ENCODE measurements at regions of chr6 and their contacts with region 1.

Region 1: DNA sequence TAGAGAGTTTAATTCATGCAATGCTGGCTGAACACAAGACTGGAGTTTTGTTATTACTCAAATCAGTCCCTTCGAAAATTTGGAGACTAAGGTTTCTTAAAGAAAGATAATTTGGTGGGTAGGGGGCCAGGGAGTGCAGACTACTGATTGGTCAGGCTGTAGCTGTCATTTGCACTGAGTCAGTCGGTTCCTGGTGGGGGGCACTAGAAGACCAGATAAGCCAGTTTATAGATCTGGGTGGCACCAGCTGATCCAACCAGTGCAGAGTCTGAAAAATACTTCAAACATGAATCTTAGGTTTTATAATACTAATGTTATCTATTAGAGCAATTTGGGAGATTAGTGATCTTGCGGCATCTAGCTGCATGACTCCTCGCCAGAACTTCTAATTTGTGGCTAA is 530.7 kb downstream of the NKAIN2 start:
- DNase-seq: no peak
- ATAC-seq: no peak
- H3K4me3 ChIP-seq: no peak overlapping the region
- H3K27ac ChIP-seq: no peak overlapping the region
- H3K4me1 ChIP-seq: no peaks in the 10 kb centered on the region
- H3K27me3 ChIP-seq: no peaks in the 10 kb centered on the region
- CTCF ChIP-seq: no peak
- POLR2A ChIP-seq: no peak

Region 2: GRCh38 chr6:124076336-124077048 is 257.9 kb before region 1 on chr6:
- intact Hi-C with region 1: no loop called
- DNase-seq: peak in 1 of 4 donors; percentile 5
- ATAC-seq: no peak
- H3K4me3 ChIP-seq: no peak overlapping the region
- H3K27ac ChIP-seq: no peak overlapping the region
- H3K4me1 ChIP-seq: no peaks in the 10 kb centered on the region
- H3K27me3 ChIP-seq: no peaks in the 10 kb centered on the region
- CTCF ChIP-seq: no peak
- POLR2A ChIP-seq: no peak

Region 3: DNA sequence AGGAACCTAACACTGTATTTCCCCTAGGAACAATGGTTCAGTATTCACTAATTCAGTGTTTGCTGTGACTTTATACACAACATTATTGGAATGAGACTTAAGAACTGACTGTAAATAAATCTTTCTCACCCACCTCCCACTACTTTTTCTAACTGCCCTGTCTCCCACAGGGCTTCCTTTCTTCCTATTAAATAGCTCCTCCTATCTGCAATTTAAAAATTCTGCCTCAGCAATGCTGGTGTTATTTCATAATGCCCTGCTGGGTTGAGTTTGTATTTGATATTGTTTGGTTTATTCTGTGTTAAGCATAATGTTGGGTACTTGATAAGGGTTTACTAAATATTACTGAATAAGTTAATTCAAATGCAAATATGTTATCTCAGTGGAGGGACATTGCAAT is 54.8 kb after region 1 on chr6:
- intact Hi-C with region 1: no loop called
- DNase-seq: no peak
- ATAC-seq: no peak
- H3K4me3 ChIP-seq: no peak overlapping the region
- H3K27ac ChIP-seq: no peak overlapping the region
- H3K4me1 ChIP-seq: no peaks in the 10 kb centered on the region
- H3K27me3 ChIP-seq: no peaks in the 10 kb centered on the region
- CTCF ChIP-seq: no peak
- POLR2A ChIP-seq: no peak

Region 4: GRCh38 chr6:124703541-124703940 is 369.2 kb after region 1 on chr6:
- intact Hi-C with region 1: loop called (anchors 5 kb)
- DNase-seq: no peak
- ATAC-seq: no peak
- H3K4me3 ChIP-seq: no peak overlapping the region
- H3K27ac ChIP-seq: no peak overlapping the region
- H3K4me1 ChIP-seq: no peaks in the 10 kb centered on the region
- H3K27me3 ChIP-seq: no peaks in the 10 kb centered on the region
- CTCF ChIP-seq: no peak
- POLR2A ChIP-seq: no peak

Measured in body of pancreas (tissue), 4 donors.